Prostate gland (tissue), 2 donors: ENCODE measurements at regions of chr6 and their contacts with region 1.

Region 1: DNA sequence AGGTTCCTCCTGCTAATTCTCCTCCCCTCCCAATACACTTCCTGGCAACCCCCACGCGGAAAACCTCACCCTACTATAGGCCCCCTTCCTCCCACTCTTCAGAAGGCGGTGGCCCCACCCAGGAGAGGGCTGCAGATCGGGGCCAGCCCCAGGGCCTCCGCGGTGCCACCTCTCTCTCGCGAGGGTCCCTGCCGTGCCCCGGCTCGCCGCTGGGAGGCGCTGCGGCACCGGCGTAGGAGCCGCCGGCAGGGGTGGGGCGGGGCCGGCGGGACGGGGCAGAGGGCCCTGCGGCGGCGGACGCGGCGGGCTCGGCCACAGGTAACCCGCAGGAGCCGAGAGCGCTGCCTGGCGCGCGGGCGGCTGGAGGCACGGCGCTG is at the start of gene ANKRD6:
- DNase-seq: peak; percentile 66
- H3K4me3 ChIP-seq: peak within 1 kb of the TSS; percentile 56 to 76
- H3K27ac ChIP-seq: peak within 1 kb of the TSS; percentile 9 to 32
- H3K4me1 ChIP-seq: no peaks in the 10 kb centered on the region
- H3K27me3 ChIP-seq: no peaks in the 10 kb centered on the region
- CTCF ChIP-seq: peak; percentile 74 to 98 (median 94)
- POLR2A ChIP-seq: peak; percentile 16
- total RNA-seq, gene ANKRD6: 11.9 to 30.9 TPM

Region 2: DNA sequence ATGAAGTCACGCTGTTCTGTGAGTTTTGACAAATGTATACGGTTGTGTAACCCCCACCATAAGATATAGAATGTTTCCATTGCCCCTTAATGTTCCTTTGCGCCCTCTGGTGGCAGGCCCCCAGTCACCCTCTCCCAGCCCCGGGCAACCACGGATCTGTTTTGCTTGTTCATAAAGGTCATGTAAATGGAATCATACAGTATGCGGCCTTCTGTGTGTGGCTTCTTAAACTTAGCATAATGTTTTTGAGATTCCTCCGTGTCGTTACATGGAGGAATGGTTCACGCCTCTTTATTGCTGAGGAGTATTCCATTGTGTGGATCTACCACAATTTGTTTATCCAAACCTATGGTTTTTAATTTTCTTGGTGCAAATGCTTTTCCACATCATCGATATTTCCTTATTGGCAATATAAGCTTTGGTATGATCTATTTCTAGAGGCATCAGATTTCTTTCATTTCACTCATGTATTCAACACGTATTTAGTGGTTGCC is 177.3 kb after region 1 on chr6:
- intact Hi-C with region 1: loop called (anchors 2 kb)
- DNase-seq: peak; percentile 52
- H3K4me3 ChIP-seq: no peak overlapping the region
- H3K27ac ChIP-seq: no peak overlapping the region
- H3K4me1 ChIP-seq: no peaks in the 10 kb centered on the region
- H3K27me3 ChIP-seq: no peaks in the 10 kb centered on the region
- CTCF ChIP-seq: peak; percentile 43 to 77 (median 72)
- POLR2A ChIP-seq: no peak